WTC11 (cell line): ENCODE measurements at regions of chr10 and their contacts with region 1.

Region 1: DNA sequence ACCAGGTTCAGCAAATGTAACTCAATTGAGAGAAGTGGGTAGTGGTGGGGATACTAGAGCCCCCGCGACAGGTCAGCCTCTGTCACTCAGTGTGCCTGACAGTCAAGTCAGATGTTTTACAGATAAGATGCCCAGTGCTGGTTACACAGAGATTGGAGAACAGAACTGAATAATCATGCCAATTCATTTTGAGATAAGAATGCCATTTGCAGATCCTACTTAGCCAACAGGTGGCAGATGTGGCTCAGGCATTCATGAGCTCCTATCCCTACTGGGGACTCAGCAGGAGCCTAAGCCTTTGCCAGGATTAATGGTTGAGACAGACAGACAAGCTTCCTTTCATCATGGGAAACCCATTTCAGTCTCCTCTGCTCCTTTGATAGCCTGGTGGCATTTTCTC is 137.8 kb downstream of the MAPK8 start:
- DNase-seq: no peak
- ATAC-seq: peak; percentile 65
- H3K4me3 Mint-ChIP-seq: no peak overlapping the region
- H3K27ac Mint-ChIP-seq: peak overlapping the region; percentile 39
- H3K4me1 Mint-ChIP-seq: peaks cover 20% of the 10 kb centered on the region
- H3K27me3 Mint-ChIP-seq: no peaks in the 10 kb centered on the region
- CTCF ChIP-seq: 0 out of 2 replicates have a peak, but pooled peaks have one; percentile 17

Region 2: DNA sequence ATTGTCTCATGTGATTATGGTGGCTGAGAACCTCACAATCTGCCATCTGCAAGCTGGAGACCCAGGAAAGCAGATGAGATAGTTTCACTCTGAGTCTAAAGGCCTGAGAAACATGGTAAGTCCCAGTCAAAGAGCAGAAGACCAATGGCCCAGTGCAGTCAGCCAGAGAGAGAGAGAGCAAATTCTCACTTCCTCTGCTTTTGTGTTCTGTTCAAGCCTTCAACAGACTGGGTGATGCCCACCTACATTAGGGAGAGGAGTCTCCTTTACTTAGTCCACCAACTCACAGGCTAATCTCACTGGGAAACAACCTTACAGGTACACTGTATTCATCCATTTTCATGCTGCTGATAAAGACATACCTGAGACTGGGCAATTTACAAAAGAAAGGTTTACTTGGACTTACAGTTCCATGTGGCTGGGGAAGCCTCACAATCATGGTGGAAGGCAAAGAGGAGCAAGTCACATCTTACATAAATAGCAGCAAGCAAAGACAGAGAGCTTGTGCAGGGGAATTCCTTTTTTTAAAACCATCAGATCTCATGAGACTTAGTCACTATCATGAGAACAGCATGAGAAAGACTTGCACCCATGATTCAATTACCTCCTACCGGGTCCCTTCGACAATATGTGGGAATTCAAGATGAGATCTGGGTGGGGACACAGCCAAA is 165.1 kb before region 1 on chr10:
- CTCF ChIA-PET with region 1: no interaction called
- POLR2A ChIA-PET with region 1: no interaction called
- DNase-seq: no peak
- ATAC-seq: no peak
- H3K4me3 Mint-ChIP-seq: no peak overlapping the region
- H3K27ac Mint-ChIP-seq: no peak overlapping the region
- H3K4me1 Mint-ChIP-seq: peaks cover 9% of the 10 kb centered on the region
- H3K27me3 Mint-ChIP-seq: no peaks in the 10 kb centered on the region; the same call in 1 of the 2 replicates
- CTCF ChIP-seq: no peak

Region 3: GRCh38 chr10:48336978-48337599 is 107.2 kb before region 1 on chr10:
- CTCF ChIA-PET with region 1: no interaction called
- POLR2A ChIA-PET with region 1: no interaction called
- DNase-seq: no peak
- ATAC-seq: no peak
- H3K4me3 Mint-ChIP-seq: no peak overlapping the region
- H3K27ac Mint-ChIP-seq: no peak overlapping the region
- H3K4me1 Mint-ChIP-seq: peaks cover 22% of the 10 kb centered on the region
- H3K27me3 Mint-ChIP-seq: no peaks in the 10 kb centered on the region
- CTCF ChIP-seq: no peak

Region 4: DNA sequence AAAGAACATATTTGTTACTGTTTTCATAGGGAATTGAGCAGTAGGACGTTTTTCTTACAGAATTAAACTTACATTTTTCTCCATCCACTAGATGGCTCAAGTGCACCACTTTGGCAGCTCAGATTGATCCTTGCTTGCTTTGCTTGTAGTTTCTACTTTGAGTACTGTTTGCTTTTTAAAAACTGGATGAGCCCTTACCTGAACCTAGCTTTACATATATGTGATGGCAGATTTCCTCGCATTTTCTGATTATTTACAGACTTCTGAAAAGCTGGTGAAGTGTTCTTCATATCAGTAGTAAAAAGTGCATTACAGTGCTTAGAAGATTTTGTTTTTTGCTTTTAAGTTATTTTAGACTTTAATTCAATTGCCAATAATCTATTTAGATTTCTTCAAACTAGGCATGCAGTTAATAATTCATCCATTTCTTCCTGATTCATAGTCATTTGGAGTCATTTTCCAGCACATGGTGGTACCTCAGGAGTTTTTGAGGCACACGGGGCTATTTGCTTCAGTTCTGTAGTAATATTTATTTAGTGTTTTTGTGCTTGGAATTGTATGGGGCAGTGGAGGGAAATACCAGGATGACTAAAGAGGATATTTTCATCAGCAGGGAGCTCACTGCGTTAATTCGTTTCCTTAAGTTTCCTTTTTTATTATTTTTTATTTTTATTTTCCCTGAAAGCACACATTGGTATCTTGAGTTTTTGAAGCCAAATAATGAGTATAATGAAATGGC is 80.5 kb before region 1 on chr10:
- CTCF ChIA-PET with region 1: interaction called, 30 read pairs
- POLR2A ChIA-PET with region 1: no interaction called
- DNase-seq: no peak
- ATAC-seq: peak; percentile 41
- H3K4me3 Mint-ChIP-seq: no peak overlapping the region
- H3K27ac Mint-ChIP-seq: no peak overlapping the region
- H3K4me1 Mint-ChIP-seq: peaks cover 17% of the 10 kb centered on the region
- H3K27me3 Mint-ChIP-seq: no peaks in the 10 kb centered on the region
- CTCF ChIP-seq: no peak

Region 5: DNA sequence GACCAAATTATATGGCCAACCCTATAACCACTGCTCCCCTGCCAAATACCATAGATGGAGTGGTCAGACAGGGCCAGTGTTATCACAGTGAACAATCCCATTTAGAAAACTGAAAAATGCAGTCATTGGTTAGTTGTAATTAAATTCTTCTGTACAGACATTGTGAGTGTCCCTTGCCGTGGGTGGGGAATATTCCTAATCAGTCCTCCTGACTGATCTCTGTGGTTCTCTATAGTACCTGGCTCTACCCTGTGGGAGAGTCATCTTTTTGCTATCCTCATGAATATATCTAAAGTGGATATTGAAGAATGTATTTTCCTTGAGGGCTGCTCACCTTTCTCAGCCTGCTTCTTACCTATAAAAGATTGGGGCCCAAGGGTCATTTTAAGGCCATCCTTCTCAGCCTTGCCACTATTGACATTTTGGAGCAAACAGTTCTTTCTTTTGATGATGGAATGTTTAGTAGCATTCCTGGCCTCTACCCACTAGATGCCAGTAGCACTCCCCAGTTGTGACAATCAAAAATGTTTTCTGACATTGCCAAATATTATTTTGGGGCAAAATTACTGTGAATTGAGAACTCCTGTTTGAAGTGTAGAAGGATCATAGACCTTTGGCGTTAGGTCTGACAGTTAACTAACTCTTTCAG is 27.6 kb before region 1 on chr10:
- CTCF ChIA-PET with region 1: interaction called, 12 read pairs
- POLR2A ChIA-PET with region 1: no interaction called
- DNase-seq: no peak
- ATAC-seq: no peak
- H3K4me3 Mint-ChIP-seq: no peak overlapping the region
- H3K27ac Mint-ChIP-seq: no peak overlapping the region
- H3K4me1 Mint-ChIP-seq: peaks cover 8% of the 10 kb centered on the region
- H3K27me3 Mint-ChIP-seq: no peaks in the 10 kb centered on the region
- CTCF ChIP-seq: no peak

Region 6: GRCh38 chr10:48463318-48464003 is 19.2 kb after region 1 on chr10:
- CTCF ChIA-PET with region 1: interaction called, 55 read pairs
- POLR2A ChIA-PET with region 1: no interaction called
- DNase-seq: no peak
- ATAC-seq: peak; percentile 25
- H3K4me3 Mint-ChIP-seq: no peak overlapping the region
- H3K27ac Mint-ChIP-seq: peak overlapping the region; percentile 68; the same call in 1 of the 2 replicates
- H3K4me1 Mint-ChIP-seq: peaks cover 21% of the 10 kb centered on the region
- H3K27me3 Mint-ChIP-seq: peaks cover 15% of the 10 kb centered on the region
- CTCF ChIP-seq: no peak

Region 7: DNA sequence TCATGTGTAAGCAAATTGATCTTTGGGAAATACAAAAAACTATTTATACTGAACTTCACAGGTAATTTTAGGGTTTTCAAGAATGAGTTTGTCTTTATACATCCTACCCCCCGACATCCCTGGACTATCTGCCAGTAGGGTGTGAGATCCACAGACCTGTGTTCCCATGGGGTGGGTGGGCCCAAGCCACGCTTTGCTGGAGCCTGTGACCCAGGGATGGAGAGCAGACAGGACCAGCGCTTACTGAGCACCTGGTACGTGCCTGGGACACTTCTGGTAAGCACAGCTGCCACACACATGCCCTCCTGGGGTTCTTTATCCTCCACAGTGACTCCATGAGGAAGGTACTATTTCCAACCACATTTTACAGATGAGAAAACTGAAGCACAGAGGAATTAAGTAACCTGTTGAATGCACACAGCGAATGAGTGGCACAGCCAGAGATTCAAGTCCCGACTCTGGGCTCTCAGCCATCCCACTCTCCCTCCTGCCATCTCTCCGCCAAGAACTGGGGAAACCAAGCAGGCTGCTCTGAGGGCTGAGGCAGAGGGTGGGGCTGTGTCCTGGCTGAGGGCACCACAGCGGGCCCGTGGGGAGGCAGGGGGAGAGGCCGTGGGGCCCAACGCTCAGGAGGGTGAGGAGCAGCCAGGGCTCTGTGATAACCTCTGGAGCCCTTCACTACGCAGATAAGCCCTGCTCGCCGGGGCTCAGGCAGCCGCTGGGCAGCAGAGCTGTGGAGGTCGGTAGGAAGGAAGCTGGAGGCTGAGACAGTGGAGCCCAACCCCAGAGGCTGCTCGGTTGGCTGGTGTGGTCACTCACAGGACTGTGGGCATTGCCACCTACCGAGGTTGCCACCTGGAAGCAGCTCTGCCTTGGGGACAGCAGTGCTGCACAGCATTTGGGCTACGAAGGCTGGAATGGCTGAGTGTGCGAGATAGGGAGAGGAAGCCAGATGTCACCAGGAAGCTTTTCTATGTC is 36.4 kb after region 1 on chr10:
- CTCF ChIA-PET with region 1: interaction called, 12 read pairs
- POLR2A ChIA-PET with region 1: no interaction called
- DNase-seq: no peak
- ATAC-seq: peak; percentile 56
- H3K4me3 Mint-ChIP-seq: no peak overlapping the region
- H3K27ac Mint-ChIP-seq: no peak overlapping the region
- H3K4me1 Mint-ChIP-seq: peaks cover 60% of the 10 kb centered on the region
- H3K27me3 Mint-ChIP-seq: no peaks in the 10 kb centered on the region; the same call in 1 of the 2 replicates
- CTCF ChIP-seq: no peak

Region 8: GRCh38 chr10:48506147-48506917 is 62.1 kb after region 1 on chr10:
- CTCF ChIA-PET with region 1: interaction called, 82 read pairs
- POLR2A ChIA-PET with region 1: no interaction called
- DNase-seq: no peak
- ATAC-seq: no peak
- H3K4me3 Mint-ChIP-seq: no peak overlapping the region
- H3K27ac Mint-ChIP-seq: peak overlapping the region; percentile 25; the same call in 1 of the 2 replicates
- H3K4me1 Mint-ChIP-seq: peaks cover 31% of the 10 kb centered on the region
- H3K27me3 Mint-ChIP-seq: no peaks in the 10 kb centered on the region
- CTCF ChIP-seq: no peak

Region 9: DNA sequence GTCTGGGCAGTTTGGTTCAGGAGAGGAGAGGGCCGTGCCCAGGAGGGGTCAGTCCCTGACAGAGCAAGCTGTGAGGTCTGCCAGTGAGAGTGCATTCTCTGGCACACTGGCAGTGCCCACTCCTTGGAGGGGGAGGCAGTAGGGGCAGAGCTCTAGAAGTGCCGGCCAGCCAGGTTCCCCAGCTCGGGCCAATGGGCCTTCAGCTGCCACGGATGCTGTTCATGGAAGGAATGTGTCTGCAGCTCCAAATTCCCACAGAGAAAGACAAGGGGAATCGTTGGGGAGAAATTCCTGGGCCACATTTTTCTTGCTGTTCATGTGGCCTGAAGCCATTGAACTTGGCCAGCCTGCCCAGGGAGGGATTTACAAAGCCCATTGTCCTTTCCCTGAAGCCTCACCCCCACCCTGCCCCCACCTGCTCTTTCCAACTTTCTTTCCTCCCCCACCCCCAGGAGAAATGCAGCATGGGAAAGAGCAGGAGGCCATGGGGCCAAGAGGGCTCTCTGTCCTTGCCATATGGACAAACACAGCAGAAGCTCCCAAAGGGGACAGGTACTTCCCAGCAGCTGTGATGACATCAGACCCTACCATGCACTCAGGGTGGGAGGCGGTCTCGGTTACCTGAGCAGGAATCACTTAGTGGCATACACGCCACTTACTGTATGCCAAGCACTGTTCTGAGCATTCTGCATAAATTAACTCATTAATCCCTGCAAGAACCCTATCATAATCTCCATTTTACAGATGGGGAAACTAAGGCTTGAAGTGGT is 89.9 kb after region 1 on chr10:
- CTCF ChIA-PET with region 1: interaction called, 18 read pairs
- POLR2A ChIA-PET with region 1: no interaction called
- DNase-seq: peak; percentile 46
- ATAC-seq: peak; percentile 38
- H3K4me3 Mint-ChIP-seq: no peak overlapping the region
- H3K27ac Mint-ChIP-seq: peak overlapping the region; percentile 80
- H3K4me1 Mint-ChIP-seq: peaks cover 54% of the 10 kb centered on the region
- H3K27me3 Mint-ChIP-seq: no peaks in the 10 kb centered on the region; the same call in 1 of the 2 replicates
- CTCF ChIP-seq: no peak